ENCODE measurements at regions of chr19 and their contacts with region 1.

Region 1: DNA sequence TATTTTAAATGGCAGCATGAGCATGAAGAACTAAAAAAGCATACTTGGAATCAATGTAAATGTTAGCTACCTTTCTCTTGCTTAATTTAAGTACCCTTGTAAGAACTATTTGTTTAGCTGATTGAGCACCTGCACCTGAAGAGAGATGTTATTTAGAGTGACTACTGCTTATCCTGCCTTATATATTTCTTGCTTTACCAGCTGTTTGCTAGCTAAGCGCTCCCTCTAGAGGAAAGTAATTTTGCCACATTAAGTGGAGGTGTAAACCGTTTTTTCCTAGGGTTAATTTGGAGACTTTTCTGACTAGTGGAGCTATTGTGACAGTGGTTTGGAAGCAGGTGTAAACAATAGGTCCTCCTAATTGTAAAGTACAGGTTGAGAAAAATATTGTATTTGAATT is 19.4 kb upstream of the PSG2 start:
- DNase-seq: no peak
- H3K4me3 ChIP-seq: no peak overlapping the region
- H3K27ac ChIP-seq: no peak overlapping the region
- H3K4me1 ChIP-seq: no peaks in the 10 kb centered on the region
- H3K27me3 ChIP-seq: no peaks in the 10 kb centered on the region
- CTCF ChIP-seq: no peak
- POLR2A ChIP-seq: no peak

Region 2: GRCh38 chr19:42794765-42795164 is 307.2 kb before region 1 on chr19:
- intact Hi-C with region 1: loop called in 1 of 2 experiments (anchors 5 kb)
- DNase-seq: no peak
- H3K4me3 ChIP-seq: no peak overlapping the region
- H3K27ac ChIP-seq: no peak overlapping the region
- H3K4me1 ChIP-seq: no peaks in the 10 kb centered on the region
- H3K27me3 ChIP-seq: no peaks in the 10 kb centered on the region
- CTCF ChIP-seq: no peak
- POLR2A ChIP-seq: no peak